Ovary (tissue), 10 donors: ENCODE measurements at regions of chr15 and their contacts with region 1.

Region 1: GRCh38 chr15:98532063-98532462 is 116.3 kb upstream of the IGF1R start:
- DNase-seq: no peak
- H3K4me3 ChIP-seq: no peak overlapping the region
- H3K27ac ChIP-seq: no peak overlapping the region
- H3K4me1 ChIP-seq: no peaks in the 10 kb centered on the region
- H3K27me3 ChIP-seq: no peaks in the 10 kb centered on the region
- CTCF ChIP-seq: no peak
- EP300 ChIP-seq: no peak
- POLR2A ChIP-seq: no peak

Region 2: GRCh38 chr15:98592136-98592535 is 60.1 kb after region 1 on chr15:
- intact Hi-C with region 1: loop called in 1 of 4 experiments (anchors 2 kb)
- DNase-seq: no peak
- H3K4me3 ChIP-seq: no peak overlapping the region
- H3K27ac ChIP-seq: no peak overlapping the region
- H3K4me1 ChIP-seq: no peaks in the 10 kb centered on the region
- H3K27me3 ChIP-seq: no peaks in the 10 kb centered on the region
- CTCF ChIP-seq: no peak
- EP300 ChIP-seq: no peak
- POLR2A ChIP-seq: no peak

Region 3: GRCh38 chr15:98620020-98620419 is 88.0 kb after region 1 on chr15:
- intact Hi-C with region 1: no loop called
- DNase-seq: no peak
- H3K4me3 ChIP-seq: no peak overlapping the region
- H3K27ac ChIP-seq: no peak overlapping the region
- H3K4me1 ChIP-seq: no peaks in the 10 kb centered on the region
- H3K27me3 ChIP-seq: no peaks in the 10 kb centered on the region
- CTCF ChIP-seq: no peak
- EP300 ChIP-seq: no peak
- POLR2A ChIP-seq: no peak